PC-9 (cell line): ENCODE measurements at regions of chr12 and their contacts with region 1.

Region 1: DNA sequence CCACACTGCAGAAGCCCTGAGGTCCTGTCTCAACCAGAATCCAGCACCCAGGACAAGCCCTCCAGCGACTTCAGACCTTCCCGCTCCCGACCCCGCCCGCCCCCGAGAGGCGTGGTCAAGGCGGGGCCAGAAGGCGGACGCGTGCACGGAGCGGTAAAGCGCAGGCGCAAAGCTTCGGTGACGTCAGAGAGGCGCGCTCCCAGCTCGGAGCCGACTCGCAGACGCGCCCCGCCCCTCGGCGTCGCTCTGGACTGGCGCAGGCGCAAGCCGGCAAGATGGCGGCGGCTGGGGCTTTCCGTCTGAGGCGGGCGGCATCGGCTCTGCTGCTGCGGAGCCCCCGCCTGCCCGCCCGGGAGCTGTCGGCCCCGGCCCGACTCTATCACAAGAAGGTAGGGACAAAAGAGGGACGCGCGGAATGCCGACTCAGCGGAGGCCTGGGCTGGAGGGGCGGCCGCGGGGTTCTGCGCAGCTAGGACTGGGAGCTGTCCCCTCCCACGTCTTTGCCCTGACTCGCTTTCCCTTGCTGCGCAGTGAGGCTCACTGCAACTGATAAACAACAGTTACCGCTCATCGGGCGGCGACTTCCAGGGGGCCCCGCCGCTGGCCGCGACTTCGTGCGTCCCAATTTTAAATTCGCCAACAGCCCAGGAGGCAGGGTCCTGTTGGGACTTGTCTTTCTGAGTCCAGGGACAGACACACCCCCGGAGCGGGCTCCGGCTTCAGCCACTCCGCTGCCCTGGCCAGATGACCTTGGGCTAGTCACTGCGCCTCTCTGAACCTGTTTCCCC is at the start of gene ISCU:
- DNase-seq: peak; percentile 87 to 98
- H3K4me3 ChIP-seq: peak within 1 kb of the TSS; percentile 72
- H3K27ac ChIP-seq: peak within 1 kb of the TSS; percentile 85
- H3K4me1 ChIP-seq: peaks cover 28% of the 10 kb centered on the region
- H3K27me3 ChIP-seq: no peaks in the 10 kb centered on the region
- CTCF ChIP-seq: no peak
- total RNA-seq, gene ISCU: 84.8 and 86.7 TPM in 2 replicates

Region 2: DNA sequence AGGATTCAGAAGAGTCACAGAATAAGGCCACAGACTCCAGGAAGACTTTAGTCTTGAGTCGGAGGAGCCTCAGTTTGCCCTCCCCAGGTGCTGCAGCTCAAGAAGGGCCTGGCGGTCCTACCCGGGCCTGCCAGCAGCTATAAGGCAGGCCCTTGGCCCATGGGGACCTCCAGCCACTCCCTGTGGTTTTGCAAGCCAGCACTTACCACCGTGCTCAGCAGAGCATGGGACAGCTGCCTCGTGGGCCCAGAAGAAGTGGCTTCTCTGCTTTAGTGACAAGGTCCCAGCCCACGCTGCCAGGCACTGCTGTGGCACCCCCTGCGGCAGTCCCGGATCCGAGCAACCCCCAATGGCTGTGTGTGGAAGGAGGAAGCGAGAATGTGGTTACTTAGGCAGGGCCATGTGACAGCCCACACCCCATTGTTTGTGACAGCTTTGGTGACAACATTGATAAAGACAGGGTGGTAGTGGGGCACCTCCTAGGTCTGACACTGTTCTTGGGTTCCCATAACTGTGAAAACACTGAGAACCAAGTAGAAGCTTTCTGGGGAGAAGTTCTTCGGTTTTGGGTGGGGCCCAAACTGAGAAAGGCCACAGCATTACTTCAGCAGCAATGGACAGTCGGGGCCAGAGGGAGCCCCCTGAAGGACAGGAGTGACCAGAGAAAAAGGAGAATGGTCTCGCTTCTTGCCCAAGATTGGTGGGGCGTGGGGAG is 71.1 kb after region 1 on chr12 and contains the start of gene SELPLG:
- CTCF ChIA-PET with region 1: interaction called, 5 read pairs
- POLR2A ChIA-PET with region 1: interaction called, 23 read pairs
- intact Hi-C with region 1: no loop called
- DNase-seq: no peak
- H3K4me3 ChIP-seq: no peak within 1 kb of the TSS
- H3K27ac ChIP-seq: no peak within 1 kb of the TSS
- H3K4me1 ChIP-seq: peaks cover 27% of the 10 kb centered on the region
- H3K27me3 ChIP-seq: no peaks in the 10 kb centered on the region
- CTCF ChIP-seq: no peak
- total RNA-seq, gene SELPLG: 0.35 and 0.96 TPM in 2 replicates

Region 3: GRCh38 chr12:108731105-108731865 is 168.7 kb after region 1 on chr12 and contains the start of gene CORO1C:
- CTCF ChIA-PET with region 1: interaction called, 3 read pairs
- POLR2A ChIA-PET with region 1: no interaction called
- intact Hi-C with region 1: loop called (anchors 2 kb)
- DNase-seq: peak; percentile 85 to 98
- H3K4me3 ChIP-seq: peak within 1 kb of the TSS; percentile 85
- H3K27ac ChIP-seq: peak within 1 kb of the TSS; percentile 84
- H3K4me1 ChIP-seq: peaks cover 46% of the 10 kb centered on the region
- H3K27me3 ChIP-seq: no peaks in the 10 kb centered on the region
- CTCF ChIP-seq: peak; percentile 80
- total RNA-seq, gene CORO1C: 122 and 139 TPM in 2 replicates

Region 4: DNA sequence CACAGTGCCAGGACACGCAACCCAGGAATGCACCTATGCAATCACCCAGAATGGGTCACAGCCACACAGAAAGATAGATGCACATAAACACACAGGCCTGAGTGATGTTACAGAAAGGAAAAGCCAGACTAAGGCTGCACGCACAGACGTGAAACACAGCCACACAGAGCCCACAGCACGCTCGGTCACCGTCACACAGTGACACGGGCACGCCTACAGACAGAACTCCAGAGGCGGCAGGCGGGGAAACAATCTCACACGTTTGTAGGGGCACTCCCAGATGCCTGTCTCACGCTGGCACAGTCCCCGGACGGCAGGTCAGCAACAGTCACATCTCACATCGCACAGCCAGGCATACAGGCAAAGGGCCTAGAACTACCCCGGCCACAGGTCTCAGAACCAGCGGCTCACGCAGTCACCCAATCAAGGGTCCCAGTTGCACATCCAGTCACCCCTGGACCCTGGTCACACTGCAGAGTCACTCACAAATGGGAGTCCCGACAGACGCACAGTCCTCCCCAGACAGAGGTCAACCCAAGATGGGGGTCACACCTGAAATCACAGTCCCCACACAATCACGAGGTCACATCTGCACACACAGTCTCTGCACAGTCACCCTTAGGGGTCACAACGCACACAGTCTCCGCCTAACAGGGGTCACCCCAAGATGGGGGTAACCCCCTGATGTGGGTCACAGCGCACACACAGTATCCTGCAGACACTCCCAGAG is 294.1 kb after region 1 on chr12:
- CTCF ChIA-PET with region 1: no interaction called
- POLR2A ChIA-PET with region 1: interaction called, 4 read pairs
- intact Hi-C with region 1: loop called (anchors 2 kb)
- DNase-seq: peak; percentile 55 to 65
- H3K4me3 ChIP-seq: peak overlapping the region; percentile 98
- H3K27ac ChIP-seq: peak overlapping the region; percentile 92
- H3K4me1 ChIP-seq: peaks cover 41% of the 10 kb centered on the region
- H3K27me3 ChIP-seq: no peaks in the 10 kb centered on the region
- CTCF ChIP-seq: no peak

Region 5: GRCh38 chr12:109052414-109053323 is 490.1 kb after region 1 on chr12 and contains the start of gene USP30:
- CTCF ChIA-PET with region 1: no interaction called
- POLR2A ChIA-PET with region 1: interaction called, 35 read pairs
- intact Hi-C with region 1: no loop called
- DNase-seq: peak; percentile 71 to 76
- H3K4me3 ChIP-seq: peak within 1 kb of the TSS; percentile 79
- H3K27ac ChIP-seq: no peak within 1 kb of the TSS
- H3K4me1 ChIP-seq: peaks cover 11% of the 10 kb centered on the region; the same call in 1 of the 2 replicates
- H3K27me3 ChIP-seq: no peaks in the 10 kb centered on the region
- CTCF ChIP-seq: no peak
- total RNA-seq, gene USP30: 12.0 and 12.5 TPM in 2 replicates

Region 6: GRCh38 chr12:109385339-109386067 is 823.0 kb after region 1 on chr12:
- CTCF ChIA-PET with region 1: no interaction called
- POLR2A ChIA-PET with region 1: no interaction called
- intact Hi-C with region 1: loop called (anchors 1 kb)
- DNase-seq: peak; percentile 6 to 52
- H3K4me3 ChIP-seq: no peak overlapping the region
- H3K27ac ChIP-seq: no peak overlapping the region
- H3K4me1 ChIP-seq: no peaks in the 10 kb centered on the region
- H3K27me3 ChIP-seq: peaks cover 9% of the 10 kb centered on the region
- CTCF ChIP-seq: peak; percentile 80